ENCODE measurements at regions of chr2 and their contacts with region 1.

Region 1: DNA sequence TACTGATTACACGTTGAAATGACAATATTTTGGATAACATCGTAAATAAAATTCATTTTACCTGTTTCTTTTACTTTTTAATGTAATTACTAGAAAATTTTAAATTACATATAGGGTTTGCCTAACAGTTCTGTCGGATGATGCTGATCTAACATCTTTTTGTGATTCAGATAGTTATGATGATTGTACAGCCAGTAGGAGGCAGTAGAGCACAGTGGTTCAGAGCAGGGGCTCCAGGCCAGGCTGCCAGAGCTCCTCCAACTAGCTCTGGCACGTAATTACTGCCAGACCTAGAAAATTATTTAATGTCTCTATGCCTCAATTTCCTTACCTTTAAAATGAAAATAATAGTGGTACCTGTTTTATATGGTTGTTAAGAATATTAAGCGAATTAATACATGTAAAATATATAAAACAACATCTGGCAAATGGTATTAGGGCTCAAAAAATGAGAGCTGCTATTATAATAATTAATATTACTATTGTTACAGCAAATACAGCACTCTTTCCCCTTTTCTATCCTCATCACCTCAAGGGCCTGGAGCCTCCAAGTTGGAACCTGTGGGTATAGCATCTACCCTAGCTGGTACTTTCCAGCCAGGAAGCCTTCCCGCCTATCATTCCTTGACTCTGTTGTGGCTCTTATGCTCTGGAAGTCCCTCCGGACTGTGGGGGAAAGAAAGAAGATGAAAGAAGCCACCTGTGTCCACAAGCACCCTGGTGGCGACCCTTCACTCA is 47.7 kb upstream of the PLA2R1 start:
- DNase-seq: peak; percentile 86
- ATAC-seq: peak; percentile 92
- H3K4me3 ChIP-seq: no peak overlapping the region
- H3K27ac ChIP-seq: no peak overlapping the region
- H3K4me1 ChIP-seq: peaks cover 7% of the 10 kb centered on the region; the same call in 1 of the 2 replicates
- H3K27me3 ChIP-seq: no peaks in the 10 kb centered on the region
- CTCF ChIP-seq: peak; percentile 91

Region 2: GRCh38 chr2:160205511-160205910 is 95.4 kb after region 1 on chr2:
- CTCF ChIA-PET with region 1: interaction called, 3 read pairs
- POLR2A ChIA-PET with region 1: no interaction called
- intact Hi-C with region 1: loop called (anchors 1 kb)
- DNase-seq: peak; percentile 99
- ATAC-seq: peak; percentile 89
- H3K4me3 ChIP-seq: peak overlapping the region; percentile 41; the same call in 1 of the 2 replicates
- H3K27ac ChIP-seq: peak overlapping the region; percentile 80
- H3K4me1 ChIP-seq: peaks cover 68% of the 10 kb centered on the region
- H3K27me3 ChIP-seq: no peaks in the 10 kb centered on the region
- CTCF ChIP-seq: no peak

Region 3: DNA sequence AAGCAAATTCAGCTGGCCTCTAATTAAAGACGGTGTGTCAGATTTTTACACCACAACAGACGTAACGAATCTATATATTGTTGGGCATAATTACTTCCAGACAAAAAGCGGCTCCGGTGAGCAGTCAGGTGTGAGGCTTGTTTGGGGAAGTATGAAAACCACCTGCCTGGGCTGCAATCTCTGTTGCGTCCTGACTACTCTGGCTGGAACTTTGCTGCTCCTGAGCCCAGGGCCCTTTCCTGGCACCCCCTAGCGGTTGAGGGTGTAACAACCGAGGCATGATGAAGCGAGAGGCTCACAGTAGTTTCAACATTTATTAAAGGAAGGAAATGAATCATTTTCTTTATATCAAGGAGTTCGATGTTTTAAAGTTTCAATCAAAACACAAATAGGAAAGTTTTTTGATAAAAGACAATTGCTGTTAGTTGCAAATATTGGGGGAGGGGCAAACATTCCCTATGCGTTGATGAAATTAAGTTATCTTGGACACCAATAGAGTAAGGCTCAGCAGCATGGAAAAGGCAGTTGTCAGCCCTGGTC is 100.6 kb after region 1 on chr2:
- CTCF ChIA-PET with region 1: interaction called, 3 read pairs
- POLR2A ChIA-PET with region 1: no interaction called
- intact Hi-C with region 1: loop called (anchors 1 kb)
- DNase-seq: peak; percentile 75
- ATAC-seq: no peak
- H3K4me3 ChIP-seq: no peak overlapping the region
- H3K27ac ChIP-seq: no peak overlapping the region
- H3K4me1 ChIP-seq: peaks cover 83% of the 10 kb centered on the region
- H3K27me3 ChIP-seq: no peaks in the 10 kb centered on the region
- CTCF ChIP-seq: peak; percentile 90

Region 4: DNA sequence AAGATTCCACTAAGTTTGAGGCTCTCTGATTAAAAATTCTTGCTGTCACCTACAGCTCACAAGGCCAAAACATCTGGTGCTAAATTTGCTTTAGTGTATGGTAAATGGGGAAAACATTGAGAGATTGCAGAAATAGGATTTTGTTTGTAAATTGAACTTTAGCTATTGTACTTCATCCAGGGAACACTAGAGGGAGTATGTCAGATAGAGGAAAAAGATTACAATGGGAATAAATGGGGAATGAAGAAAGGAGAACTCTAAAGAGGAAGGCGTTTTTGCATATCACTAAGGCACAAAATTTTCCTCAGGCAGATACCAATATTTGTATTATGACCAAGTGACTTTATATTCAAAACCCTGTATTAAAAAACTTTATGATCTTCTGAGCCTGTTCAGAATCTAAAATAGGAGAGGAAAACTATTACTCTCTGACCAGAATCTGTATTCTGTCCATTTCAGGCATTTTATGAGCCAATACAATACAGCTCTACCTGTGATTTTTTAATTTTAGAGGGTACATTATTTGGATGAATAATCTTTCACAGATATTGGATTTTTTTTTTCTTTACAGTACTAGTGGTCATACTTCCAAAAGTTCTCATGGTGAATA is 142.3 kb after region 1 on chr2:
- CTCF ChIA-PET with region 1: no interaction called
- POLR2A ChIA-PET with region 1: no interaction called
- intact Hi-C with region 1: loop called (anchors 1 kb)
- DNase-seq: peak; percentile 75
- ATAC-seq: peak; percentile 37; the same call in 1 of the 2 replicates
- H3K4me3 ChIP-seq: no peak overlapping the region
- H3K27ac ChIP-seq: no peak overlapping the region
- H3K4me1 ChIP-seq: peaks cover 17% of the 10 kb centered on the region
- H3K27me3 ChIP-seq: no peaks in the 10 kb centered on the region
- CTCF ChIP-seq: peak; percentile 82

Region 5: DNA sequence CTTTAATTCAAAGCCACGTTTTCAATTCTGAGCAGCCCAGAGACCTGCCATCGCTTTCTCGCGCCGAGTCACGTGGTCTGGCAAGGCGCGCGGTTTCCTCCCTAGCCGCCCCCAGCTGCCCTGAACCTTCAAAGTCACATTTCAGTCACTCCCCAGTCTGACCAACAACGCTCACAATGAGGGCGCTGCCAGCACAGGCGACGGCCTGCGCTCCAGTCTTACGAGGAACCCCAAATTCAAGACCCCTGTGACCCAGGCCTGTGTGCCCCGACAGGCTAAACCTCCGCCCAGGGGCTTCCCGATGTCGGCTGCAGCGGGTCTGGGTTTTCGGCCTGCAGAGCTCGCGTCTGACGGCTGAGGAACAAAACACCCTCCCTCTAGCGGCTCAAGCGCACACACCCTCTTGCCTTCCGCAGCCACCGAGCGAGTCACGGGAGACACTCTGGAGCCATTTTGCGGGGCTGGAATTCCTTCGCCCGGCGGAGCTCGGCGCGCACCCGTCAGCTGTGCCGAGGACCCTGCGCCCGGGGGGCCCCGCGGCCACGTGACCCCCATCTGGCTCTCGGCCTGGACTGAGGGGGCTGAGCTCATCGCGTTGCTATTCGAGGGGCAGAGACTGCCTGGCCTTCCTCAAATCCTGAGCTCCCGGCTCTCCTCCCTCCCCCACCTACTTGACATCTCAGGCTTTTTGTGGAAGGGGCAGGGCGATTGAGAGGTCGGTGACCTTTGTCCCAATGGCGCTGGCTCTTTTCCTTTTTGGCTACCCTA is 159.9 kb after region 1 on chr2:
- CTCF ChIA-PET with region 1: no interaction called
- POLR2A ChIA-PET with region 1: no interaction called
- intact Hi-C with region 1: loop called (anchors 5 kb)
- DNase-seq: no peak
- ATAC-seq: no peak
- H3K4me3 ChIP-seq: no peak overlapping the region
- H3K27ac ChIP-seq: no peak overlapping the region
- H3K4me1 ChIP-seq: no peaks in the 10 kb centered on the region
- H3K27me3 ChIP-seq: no peaks in the 10 kb centered on the region
- CTCF ChIP-seq: no peak

Region 6: GRCh38 chr2:160970052-160970965 is 860.2 kb after region 1 on chr2:
- CTCF ChIA-PET with region 1: interaction called, 10 read pairs
- POLR2A ChIA-PET with region 1: no interaction called
- intact Hi-C with region 1: loop called (anchors 5 kb)
- DNase-seq: peak; percentile 87
- ATAC-seq: peak; percentile 70
- H3K4me3 ChIP-seq: peak overlapping the region; percentile 26; the same call in 1 of the 2 replicates
- H3K27ac ChIP-seq: peak overlapping the region; percentile 65
- H3K4me1 ChIP-seq: peaks cover 11% of the 10 kb centered on the region
- H3K27me3 ChIP-seq: no peaks in the 10 kb centered on the region
- CTCF ChIP-seq: peak; percentile 94

Region 7: DNA sequence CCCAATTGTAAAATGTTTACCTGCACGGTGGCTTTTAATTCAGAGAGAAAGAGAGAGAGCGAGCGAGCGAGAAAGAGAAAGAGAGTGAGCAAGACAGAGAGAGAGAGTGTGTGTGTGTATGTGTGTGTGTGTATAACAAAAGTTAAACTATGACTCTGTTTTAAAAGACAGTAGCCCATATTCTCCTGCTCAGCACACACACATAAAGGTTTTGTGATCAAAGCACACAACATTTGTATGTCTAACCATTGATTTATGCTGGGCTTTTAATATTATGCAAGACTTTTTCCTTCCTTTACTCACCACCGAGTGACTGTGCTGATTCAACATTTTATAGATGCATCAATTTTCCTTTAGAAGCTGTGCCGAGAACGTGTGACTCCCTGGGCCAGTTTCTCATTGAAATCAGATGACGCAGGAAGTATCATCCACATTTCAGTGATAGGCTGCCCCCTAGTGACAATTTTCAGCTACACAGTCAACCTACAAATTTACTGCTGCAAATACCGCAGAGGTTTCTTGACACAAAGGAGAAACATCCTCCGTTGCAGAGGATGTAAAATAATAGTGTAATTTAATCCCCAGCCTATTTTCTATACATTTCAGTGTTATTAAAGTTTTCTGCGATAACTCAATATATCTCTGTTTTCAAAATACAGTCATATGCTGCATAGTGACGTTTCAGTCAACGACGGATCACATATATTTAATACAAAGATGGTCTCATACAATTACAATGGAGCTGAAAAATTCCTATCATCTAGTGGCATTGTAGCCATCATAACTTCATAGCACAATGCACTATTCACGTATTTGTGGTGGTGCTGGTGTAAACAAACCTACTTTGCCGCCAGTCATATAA is 884.3 kb after region 1 on chr2:
- CTCF ChIA-PET with region 1: interaction called, 5 read pairs
- POLR2A ChIA-PET with region 1: no interaction called
- intact Hi-C with region 1: loop called (anchors 1 kb)
- DNase-seq: peak; percentile 92
- ATAC-seq: peak; percentile 89
- H3K4me3 ChIP-seq: no peak overlapping the region
- H3K27ac ChIP-seq: no peak overlapping the region
- H3K4me1 ChIP-seq: peaks cover 7% of the 10 kb centered on the region
- H3K27me3 ChIP-seq: no peaks in the 10 kb centered on the region
- CTCF ChIP-seq: peak; percentile 94